CD8-positive, alpha-beta T cell (primary cell): ENCODE measurements at regions of chr4 and their contacts with region 1.

Region 1: GRCh38 chr4:153785910-153786721 is 2.8 kb downstream of the SFRP2 start:
- DNase-seq: peak in 2 of 9 experiments; percentile 15 to 40
- ATAC-seq: no peak
- H3K4me3 ChIP-seq: no peak overlapping the region
- H3K4me3 Mint-ChIP-seq: no peak overlapping the region
- H3K27ac ChIP-seq: no peak overlapping the region
- H3K27ac Mint-ChIP-seq: no peak overlapping the region
- H3K4me1 ChIP-seq: peaks cover 25% of the 10 kb centered on the region
- H3K4me1 Mint-ChIP-seq: peaks cover 26% of the 10 kb centered on the region
- H3K27me3 ChIP-seq: peaks cover 12 to 33% of the 10 kb centered on the region in 2 experiments
- H3K27me3 Mint-ChIP-seq: peaks cover 73% of the 10 kb centered on the region
- CTCF ChIP-seq: peak; percentile 58

Region 2: DNA sequence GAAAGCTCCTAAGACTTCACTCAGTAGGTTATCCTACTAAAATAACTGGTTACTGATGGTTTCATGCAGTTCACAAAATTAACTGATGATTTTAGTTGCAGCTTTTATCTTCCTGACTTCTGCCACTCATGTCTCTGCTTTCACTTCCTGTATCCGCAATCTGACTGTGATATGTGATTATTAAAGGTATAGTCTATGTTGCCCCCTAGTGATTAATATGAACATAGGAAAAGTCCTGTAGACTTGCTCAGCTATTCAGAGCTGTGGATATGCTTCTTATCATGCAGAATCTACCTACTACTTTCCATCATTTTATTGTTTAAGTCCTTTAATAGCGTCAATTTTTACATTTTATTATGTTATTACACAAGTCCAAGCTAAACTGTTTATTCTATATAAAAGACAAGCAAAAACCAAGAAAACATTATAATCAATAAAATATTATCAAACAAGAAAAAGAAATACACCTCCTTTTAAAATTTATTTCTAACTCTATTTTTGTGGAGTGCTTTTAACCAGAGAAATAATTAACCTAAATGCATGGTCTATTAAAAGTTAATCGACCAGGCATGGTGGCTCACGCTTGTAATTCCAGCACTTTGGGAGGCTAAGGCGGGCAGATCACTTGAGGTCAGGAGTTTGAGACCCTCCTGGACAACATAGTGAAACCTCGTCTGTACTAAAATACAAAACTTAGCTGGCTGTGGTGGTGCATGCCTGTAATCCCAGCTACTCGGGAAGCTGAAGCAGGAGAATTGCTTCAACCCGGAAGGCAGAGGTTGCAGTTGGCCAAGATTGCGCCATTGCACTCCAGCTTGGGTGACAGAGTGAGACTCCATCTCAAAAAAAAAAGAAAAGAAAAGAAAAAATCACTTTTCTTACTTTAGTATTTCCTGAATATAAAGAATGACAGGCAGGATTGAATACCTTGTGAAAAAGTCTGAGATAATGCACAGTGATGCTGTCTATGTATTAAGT is 142.4 kb before region 1 on chr4:
- CTCF ChIA-PET with region 1: no interaction called
- POLR2A ChIA-PET with region 1: no interaction called
- intact Hi-C with region 1: no loop called
- DNase-seq: peak in 2 of 9 experiments; percentile 63 to 75
- ATAC-seq: peak; percentile 99
- H3K4me3 ChIP-seq: no peak overlapping the region
- H3K4me3 Mint-ChIP-seq: no peak overlapping the region
- H3K27ac ChIP-seq: no peak overlapping the region
- H3K27ac Mint-ChIP-seq: peak overlapping the region; percentile 49
- H3K4me1 ChIP-seq: no peaks in the 10 kb centered on the region
- H3K4me1 Mint-ChIP-seq: peaks cover 3% of the 10 kb centered on the region
- H3K27me3 ChIP-seq: no peaks in the 10 kb centered on the region
- H3K27me3 Mint-ChIP-seq: no peaks in the 10 kb centered on the region
- CTCF ChIP-seq: peak; percentile 62

Region 3: DNA sequence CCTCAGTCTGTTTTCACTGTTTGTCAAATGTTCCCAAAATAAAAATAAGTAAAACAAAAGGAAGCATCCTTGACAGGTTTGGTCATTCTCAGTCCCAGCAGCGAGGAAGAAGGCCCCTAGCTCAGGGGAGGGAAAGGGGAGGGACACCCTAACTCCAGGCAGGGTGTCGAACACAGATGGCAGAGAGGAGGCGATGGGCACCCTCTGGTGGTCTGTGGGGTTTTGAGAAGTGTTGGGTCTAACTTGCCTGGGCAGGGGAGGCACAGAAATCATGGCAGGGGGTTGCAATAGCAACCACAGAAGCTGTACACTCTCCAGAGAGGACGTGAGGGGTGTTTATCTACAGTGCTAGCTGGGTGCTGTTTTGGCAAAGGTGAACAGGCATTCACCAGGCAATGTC is 232.5 kb after region 1 on chr4:
- CTCF ChIA-PET with region 1: interaction called, 21 read pairs
- POLR2A ChIA-PET with region 1: no interaction called
- intact Hi-C with region 1: loop called (anchors 2 kb)
- DNase-seq: peak in 3 of 9 experiments; percentile 14 to 40 (median 22)
- ATAC-seq: no peak
- H3K4me3 ChIP-seq: no peak overlapping the region
- H3K4me3 Mint-ChIP-seq: no peak overlapping the region
- H3K27ac ChIP-seq: no peak overlapping the region
- H3K27ac Mint-ChIP-seq: no peak overlapping the region
- H3K4me1 ChIP-seq: no peaks in the 10 kb centered on the region
- H3K4me1 Mint-ChIP-seq: no peaks in the 10 kb centered on the region
- H3K27me3 ChIP-seq: peaks cover 0 to 3% of the 10 kb centered on the region in 2 experiments
- H3K27me3 Mint-ChIP-seq: peaks cover 8% of the 10 kb centered on the region
- CTCF ChIP-seq: no peak

Region 4: GRCh38 chr4:154506253-154506652 is 720.1 kb after region 1 on chr4:
- CTCF ChIA-PET with region 1: no interaction called
- POLR2A ChIA-PET with region 1: no interaction called
- intact Hi-C with region 1: loop called (anchors 2 to 10 kb)
- DNase-seq: peak in 1 of 9 experiments; percentile 19
- ATAC-seq: no peak
- H3K4me3 ChIP-seq: no peak overlapping the region
- H3K4me3 Mint-ChIP-seq: no peak overlapping the region
- H3K27ac ChIP-seq: no peak overlapping the region
- H3K27ac Mint-ChIP-seq: no peak overlapping the region
- H3K4me1 ChIP-seq: no peaks in the 10 kb centered on the region
- H3K4me1 Mint-ChIP-seq: no peaks in the 10 kb centered on the region
- H3K27me3 ChIP-seq: no peaks in the 10 kb centered on the region
- H3K27me3 Mint-ChIP-seq: peaks cover 41% of the 10 kb centered on the region
- CTCF ChIP-seq: no peak

Region 5: DNA sequence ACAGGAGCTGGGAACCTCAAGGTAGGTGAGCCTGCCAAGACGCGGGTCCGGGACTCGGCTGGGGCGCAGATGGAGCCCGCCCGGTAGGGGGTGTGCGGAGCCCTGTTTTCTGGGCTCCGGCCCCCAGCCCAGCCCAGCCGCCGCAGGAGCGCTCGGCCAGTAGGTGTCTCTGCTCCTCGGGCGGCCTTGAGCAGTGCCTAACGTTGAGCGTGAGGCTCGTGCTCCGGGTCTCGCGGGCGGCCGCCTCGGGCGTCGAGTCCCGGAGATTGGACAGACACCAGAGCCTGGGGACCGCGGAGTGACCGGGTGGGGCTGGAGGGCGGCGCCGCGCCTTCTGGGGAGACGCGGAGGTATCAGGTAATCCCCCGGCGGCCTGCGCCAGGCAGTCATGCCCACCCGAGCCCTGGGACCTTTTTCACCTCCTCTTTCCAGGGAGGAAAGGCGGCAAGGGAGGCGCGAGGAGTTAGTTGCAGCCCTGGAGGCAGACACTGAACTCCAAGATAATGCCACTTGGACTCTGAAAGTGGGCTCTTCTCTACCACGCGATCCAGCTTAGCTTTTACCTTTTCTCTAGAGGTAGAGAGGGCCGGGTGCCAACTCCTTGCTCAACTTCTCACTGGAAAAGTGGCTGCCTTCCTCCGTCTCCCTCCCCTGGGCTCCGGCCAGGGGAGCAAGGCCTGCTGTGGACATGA is 840.8 kb after region 1 on chr4:
- CTCF ChIA-PET with region 1: no interaction called
- POLR2A ChIA-PET with region 1: no interaction called
- intact Hi-C with region 1: loop called in 1 of 2 experiments (anchors 10 kb)
- DNase-seq: peak in 7 of 9 experiments; percentile 8 to 50 (median 27)
- ATAC-seq: peak; percentile 52
- H3K4me3 ChIP-seq: peak overlapping the region in 1 of 2 experiments; percentile 39
- H3K4me3 Mint-ChIP-seq: no peak overlapping the region
- H3K27ac ChIP-seq: no peak overlapping the region
- H3K27ac Mint-ChIP-seq: no peak overlapping the region
- H3K4me1 ChIP-seq: peaks cover 4% of the 10 kb centered on the region
- H3K4me1 Mint-ChIP-seq: no peaks in the 10 kb centered on the region
- H3K27me3 ChIP-seq: peaks cover 0 to 6% of the 10 kb centered on the region in 2 experiments
- H3K27me3 Mint-ChIP-seq: peaks cover 22% of the 10 kb centered on the region
- CTCF ChIP-seq: no peak